ENCODE measurements at regions of chr11 and their contacts with region 1.

Region 1: GRCh38 chr11:128422576-128423370 is 164.6 kb downstream of the ETS1 start:
- DNase-seq: peak; percentile 85
- H3K4me3 Mint-ChIP-seq: no peak overlapping the region
- H3K27ac Mint-ChIP-seq: peak overlapping the region; percentile 79
- H3K4me1 Mint-ChIP-seq: peaks cover 32% of the 10 kb centered on the region
- H3K27me3 Mint-ChIP-seq: no peaks in the 10 kb centered on the region

Region 2: DNA sequence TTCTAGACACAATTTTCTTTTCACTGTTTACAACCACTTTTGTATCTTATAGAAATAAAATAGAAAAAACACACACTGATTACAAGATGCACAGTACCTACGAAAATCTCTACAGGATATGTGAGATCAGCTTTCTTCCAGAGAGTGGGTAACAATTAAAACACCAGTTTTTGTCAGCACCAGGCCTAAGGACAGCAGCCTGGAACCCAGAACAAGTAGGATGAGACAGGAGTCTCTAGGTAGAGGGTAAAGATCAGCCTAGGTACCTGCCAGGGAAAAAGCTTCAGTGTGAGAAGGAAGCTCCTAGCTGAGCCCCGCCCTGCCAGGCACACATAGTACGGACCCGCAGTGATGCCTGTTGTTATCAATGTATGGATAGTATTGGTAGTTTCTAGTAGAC is 1484.1 kb before region 1 on chr11:
- CTCF ChIA-PET with region 1: no interaction called
- POLR2A ChIA-PET with region 1: no interaction called
- DNase-seq: no peak
- H3K4me3 Mint-ChIP-seq: no peak overlapping the region
- H3K27ac Mint-ChIP-seq: no peak overlapping the region
- H3K4me1 Mint-ChIP-seq: no peaks in the 10 kb centered on the region
- H3K27me3 Mint-ChIP-seq: peaks cover 2% of the 10 kb centered on the region

Region 3: DNA sequence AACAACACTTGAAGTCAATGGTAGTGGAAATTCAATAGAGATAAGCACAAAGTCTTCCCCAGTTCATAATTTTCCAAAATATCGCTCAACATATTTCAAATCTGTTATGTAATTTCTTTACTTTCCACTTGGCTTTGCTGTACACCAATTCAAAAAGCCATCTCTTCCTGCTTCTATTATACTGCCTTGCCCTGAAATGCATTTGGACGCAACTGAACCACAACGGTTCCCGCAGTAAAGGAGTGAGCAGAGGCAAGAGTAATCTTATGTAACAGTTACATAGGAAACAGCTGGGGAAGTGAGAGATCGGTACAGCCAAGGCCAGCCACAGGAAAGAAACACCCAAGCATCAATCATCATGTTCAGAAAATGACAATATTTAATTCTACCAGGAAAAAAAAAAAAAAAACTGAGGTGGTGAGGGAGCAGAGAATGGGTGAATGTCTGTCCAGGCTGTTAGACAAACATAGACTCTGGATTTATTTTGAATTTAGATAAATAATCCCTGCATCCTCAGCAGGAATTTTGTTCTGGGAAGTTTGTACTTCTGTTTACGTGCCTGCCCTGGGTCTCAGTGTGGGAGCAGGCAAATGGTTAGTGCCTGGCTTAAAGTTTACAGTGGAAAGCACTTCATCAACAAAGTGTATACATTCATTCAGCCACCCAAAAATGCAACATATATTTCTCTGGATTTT is 227.6 kb before region 1 on chr11:
- CTCF ChIA-PET with region 1: no interaction called
- POLR2A ChIA-PET with region 1: no interaction called
- DNase-seq: peak; percentile 76
- H3K4me3 Mint-ChIP-seq: peak overlapping the region; percentile 8
- H3K27ac Mint-ChIP-seq: peak overlapping the region; percentile 9
- H3K4me1 Mint-ChIP-seq: peaks cover 34% of the 10 kb centered on the region
- H3K27me3 Mint-ChIP-seq: peaks cover 3% of the 10 kb centered on the region

Region 4: GRCh38 chr11:128407962-128408361 is 14.8 kb before region 1 on chr11:
- CTCF ChIA-PET with region 1: interaction called, 12 read pairs
- POLR2A ChIA-PET with region 1: no interaction called
- DNase-seq: no peak
- H3K4me3 Mint-ChIP-seq: no peak overlapping the region
- H3K27ac Mint-ChIP-seq: no peak overlapping the region
- H3K4me1 Mint-ChIP-seq: peaks cover 20% of the 10 kb centered on the region
- H3K27me3 Mint-ChIP-seq: no peaks in the 10 kb centered on the region